ENCODE measurements at regions of chr12 and their contacts with region 1.

Region 1: GRCh38 chr12:13211859-13212664 is 15.5 kb downstream of the EMP1 start:
- DNase-seq: peak; percentile 81
- H3K4me3 Mint-ChIP-seq: peak overlapping the region; percentile 53
- H3K27ac Mint-ChIP-seq: peak overlapping the region; percentile 93
- H3K4me1 Mint-ChIP-seq: peaks cover 54% of the 10 kb centered on the region
- H3K27me3 Mint-ChIP-seq: no peaks in the 10 kb centered on the region

Region 2: GRCh38 chr12:12786716-12787601 is 425.1 kb before region 1 on chr12:
- CTCF ChIA-PET with region 1: interaction called, 15 read pairs
- POLR2A ChIA-PET with region 1: no interaction called
- intact Hi-C with region 1: loop called (anchors 2 kb)
- DNase-seq: peak; percentile 80
- H3K4me3 Mint-ChIP-seq: peak overlapping the region; percentile 83
- H3K27ac Mint-ChIP-seq: peak overlapping the region; percentile 80
- H3K4me1 Mint-ChIP-seq: peaks cover 36% of the 10 kb centered on the region
- H3K27me3 Mint-ChIP-seq: no peaks in the 10 kb centered on the region

Region 3: DNA sequence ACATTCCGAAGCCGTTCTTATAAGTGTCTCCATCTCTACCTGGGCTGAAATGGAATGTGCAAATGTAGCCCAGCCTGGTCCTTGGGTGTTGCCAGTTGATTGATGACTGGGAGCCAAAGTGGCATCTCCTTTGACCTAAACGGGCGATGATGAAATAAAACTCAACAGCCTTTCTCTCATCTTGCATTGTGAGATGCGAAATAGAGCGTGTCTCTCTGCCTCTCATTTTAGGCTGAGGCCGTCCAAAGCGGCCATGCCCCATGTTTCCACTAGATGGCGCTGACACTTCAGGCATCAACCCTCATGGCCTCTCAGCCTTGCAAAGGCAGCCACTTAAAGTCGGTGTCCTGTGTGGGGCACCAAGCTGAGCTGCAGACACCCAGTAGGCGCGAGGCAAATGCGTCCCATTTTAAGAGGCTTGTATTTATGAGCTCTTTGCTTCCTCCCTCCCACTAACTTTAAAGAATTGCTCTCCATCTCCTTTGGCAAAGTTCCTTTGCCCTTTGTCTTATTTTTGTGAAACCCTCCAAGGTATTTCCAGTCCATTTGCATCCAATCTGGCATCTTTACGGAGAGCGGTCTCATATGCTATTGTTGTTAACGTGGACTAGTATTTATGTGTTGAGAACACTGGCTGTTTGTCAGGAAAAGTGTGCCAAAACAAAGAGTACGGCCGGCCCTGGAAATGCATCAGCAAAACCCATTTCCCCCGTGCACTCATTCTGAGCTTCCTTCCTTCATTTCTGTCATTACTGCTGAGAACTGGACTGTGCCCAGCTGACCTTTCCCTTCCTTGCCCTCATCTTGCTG is 295.7 kb before region 1 on chr12:
- CTCF ChIA-PET with region 1: interaction called, 68 read pairs
- POLR2A ChIA-PET with region 1: no interaction called
- intact Hi-C with region 1: loop called (anchors 1 kb)
- DNase-seq: peak; percentile 91
- H3K4me3 Mint-ChIP-seq: no peak overlapping the region
- H3K27ac Mint-ChIP-seq: no peak overlapping the region
- H3K4me1 Mint-ChIP-seq: peaks cover 9% of the 10 kb centered on the region
- H3K27me3 Mint-ChIP-seq: peaks cover 12% of the 10 kb centered on the region

Region 4: GRCh38 chr12:13094347-13094746 is 117.7 kb before region 1 on chr12:
- CTCF ChIA-PET with region 1: interaction called, 173 read pairs
- POLR2A ChIA-PET with region 1: interaction called, 5 read pairs
- intact Hi-C with region 1: loop called (anchors 1 kb)
- DNase-seq: no peak
- H3K4me3 Mint-ChIP-seq: no peak overlapping the region
- H3K27ac Mint-ChIP-seq: no peak overlapping the region
- H3K4me1 Mint-ChIP-seq: peaks cover 30% of the 10 kb centered on the region
- H3K27me3 Mint-ChIP-seq: no peaks in the 10 kb centered on the region

Region 5: GRCh38 chr12:13187399-13187798 is 24.7 kb before region 1 on chr12:
- CTCF ChIA-PET with region 1: interaction called, 23 read pairs
- POLR2A ChIA-PET with region 1: no interaction called
- intact Hi-C with region 1: no loop called
- DNase-seq: no peak
- H3K4me3 Mint-ChIP-seq: no peak overlapping the region
- H3K27ac Mint-ChIP-seq: no peak overlapping the region
- H3K4me1 Mint-ChIP-seq: no peaks in the 10 kb centered on the region
- H3K27me3 Mint-ChIP-seq: peaks cover 5% of the 10 kb centered on the region

Region 6: DNA sequence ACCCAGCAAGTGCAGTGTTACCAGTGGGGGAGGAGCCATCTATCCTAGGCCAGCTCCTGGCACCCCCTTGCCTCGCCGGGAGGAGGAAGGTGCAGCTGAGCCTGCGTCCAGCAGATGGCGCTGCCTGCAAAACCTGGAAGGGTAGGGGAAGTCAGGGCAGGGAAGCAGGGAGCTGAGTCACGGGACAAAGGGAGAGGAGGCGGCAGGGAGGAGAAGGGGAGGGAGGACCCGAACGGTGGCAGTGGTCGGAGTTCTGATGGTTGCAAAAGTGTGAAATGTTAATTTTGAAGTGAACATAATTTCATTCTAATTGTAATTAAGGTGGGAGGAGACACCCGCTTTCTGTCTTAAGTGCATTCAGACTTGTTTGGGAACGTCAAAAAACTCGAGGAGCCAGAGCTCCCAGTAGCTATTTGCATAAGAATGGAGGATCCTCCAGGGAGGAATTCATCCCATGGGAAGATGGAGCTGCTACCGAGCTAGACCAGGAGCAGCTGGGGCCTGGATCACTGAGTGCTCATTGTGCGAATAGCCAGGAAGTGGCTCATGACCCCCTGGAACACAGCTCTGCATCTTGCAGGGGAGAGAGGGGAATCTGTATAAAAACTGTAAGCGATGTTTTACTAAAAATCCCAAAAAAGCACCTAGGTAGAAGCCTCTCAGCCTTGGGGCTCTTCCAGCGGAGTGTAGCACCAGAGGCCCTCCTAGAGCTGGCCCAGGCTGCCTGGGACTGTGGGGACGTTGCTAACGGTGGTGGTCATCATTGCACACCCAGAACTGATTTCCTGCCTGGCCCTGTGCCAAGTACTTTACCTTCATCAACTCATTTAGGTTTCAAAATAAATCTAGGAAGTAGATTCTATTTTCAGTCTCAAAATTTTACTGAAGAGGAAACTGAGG is 44.0 kb after region 1 on chr12:
- CTCF ChIA-PET with region 1: interaction called, 20 read pairs
- POLR2A ChIA-PET with region 1: no interaction called
- intact Hi-C with region 1: no loop called
- DNase-seq: peak; percentile 91
- H3K4me3 Mint-ChIP-seq: no peak overlapping the region
- H3K27ac Mint-ChIP-seq: no peak overlapping the region
- H3K4me1 Mint-ChIP-seq: no peaks in the 10 kb centered on the region
- H3K27me3 Mint-ChIP-seq: peaks cover 6% of the 10 kb centered on the region